Naive thymus-derived CD4-positive, alpha-beta T cell (primary cell): ENCODE measurements at regions of chr12 and their contacts with region 1.

Region 1: DNA sequence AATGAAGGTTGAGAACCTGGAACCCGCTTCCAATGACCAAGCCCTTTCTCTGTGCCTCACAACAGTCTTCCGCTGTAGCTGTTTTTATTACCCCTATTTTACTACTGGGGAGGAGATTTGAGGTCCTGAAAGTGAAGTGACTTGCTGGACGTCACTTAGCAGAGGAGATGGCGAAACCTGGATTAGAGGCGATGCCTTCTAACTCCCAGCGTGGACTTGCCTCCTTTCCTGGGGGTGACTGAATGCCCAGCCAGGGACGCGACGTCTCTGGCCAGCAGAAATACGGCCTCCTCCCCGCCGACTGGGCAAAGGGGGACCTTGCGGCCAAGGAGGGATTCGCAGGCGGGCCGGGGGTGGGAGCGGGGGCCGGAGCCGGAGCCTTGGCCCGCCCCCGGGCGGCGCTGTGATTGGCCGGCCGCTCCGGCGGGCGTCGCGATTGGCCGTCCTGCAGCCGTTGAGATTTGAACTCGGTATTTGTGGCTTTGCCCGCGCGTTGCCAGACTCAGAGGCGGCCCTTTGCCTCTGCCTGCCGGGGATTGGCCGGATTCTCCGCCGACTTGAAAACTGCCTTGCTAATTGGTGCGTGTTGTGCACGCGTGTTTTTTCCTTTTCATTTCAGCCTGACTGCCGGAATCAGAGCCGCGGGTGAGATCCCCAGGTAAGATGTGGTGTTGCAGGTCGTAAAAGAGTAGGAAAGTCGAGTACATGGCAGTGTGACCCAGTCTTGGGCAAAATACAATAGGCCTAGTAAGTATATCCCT is at the start of gene NCAPD2:
- DNase-seq: peak; percentile 82 to 97 (median 96)
- ATAC-seq: peak; percentile 91
- H3K4me3 ChIP-seq: peak within 1 kb of the TSS; percentile 98
- H3K4me3 Mint-ChIP-seq: peak within 1 kb of the TSS; percentile 86 to 98 (median 96)
- H3K27ac ChIP-seq: peak within 1 kb of the TSS; percentile 83
- H3K27ac Mint-ChIP-seq: peak within 1 kb of the TSS; percentile 87 to 97 (median 96)
- H3K4me1 ChIP-seq: peaks cover 22 to 24% of the 10 kb centered on the region in 2 donors
- H3K4me1 Mint-ChIP-seq: peaks cover 18 to 44% (median 37%) of the 10 kb centered on the region in 7 donors
- H3K27me3 ChIP-seq: no peaks in the 10 kb centered on the region
- H3K27me3 Mint-ChIP-seq: no peaks in the 10 kb centered on the region
- total RNA-seq, gene NCAPD2: 30.3 to 121 (median 38.4) TPM

Region 2: GRCh38 chr12:5716231-5716630 is 777.4 kb before region 1 on chr12:
- CTCF ChIA-PET with region 1: no interaction called
- POLR2A ChIA-PET with region 1: no interaction called
- intact Hi-C with region 1: no loop called
- DNase-seq: no peak
- ATAC-seq: no peak
- H3K4me3 ChIP-seq: no peak overlapping the region
- H3K4me3 Mint-ChIP-seq: no peak overlapping the region
- H3K27ac ChIP-seq: no peak overlapping the region
- H3K27ac Mint-ChIP-seq: no peak overlapping the region
- H3K4me1 ChIP-seq: no peaks in the 10 kb centered on the region
- H3K4me1 Mint-ChIP-seq: peaks cover 0 to 14% (median 4%) of the 10 kb centered on the region in 7 donors
- H3K27me3 ChIP-seq: no peaks in the 10 kb centered on the region
- H3K27me3 Mint-ChIP-seq: peaks cover 4 to 35% (median 14%) of the 10 kb centered on the region in 5 donors

Region 3: DNA sequence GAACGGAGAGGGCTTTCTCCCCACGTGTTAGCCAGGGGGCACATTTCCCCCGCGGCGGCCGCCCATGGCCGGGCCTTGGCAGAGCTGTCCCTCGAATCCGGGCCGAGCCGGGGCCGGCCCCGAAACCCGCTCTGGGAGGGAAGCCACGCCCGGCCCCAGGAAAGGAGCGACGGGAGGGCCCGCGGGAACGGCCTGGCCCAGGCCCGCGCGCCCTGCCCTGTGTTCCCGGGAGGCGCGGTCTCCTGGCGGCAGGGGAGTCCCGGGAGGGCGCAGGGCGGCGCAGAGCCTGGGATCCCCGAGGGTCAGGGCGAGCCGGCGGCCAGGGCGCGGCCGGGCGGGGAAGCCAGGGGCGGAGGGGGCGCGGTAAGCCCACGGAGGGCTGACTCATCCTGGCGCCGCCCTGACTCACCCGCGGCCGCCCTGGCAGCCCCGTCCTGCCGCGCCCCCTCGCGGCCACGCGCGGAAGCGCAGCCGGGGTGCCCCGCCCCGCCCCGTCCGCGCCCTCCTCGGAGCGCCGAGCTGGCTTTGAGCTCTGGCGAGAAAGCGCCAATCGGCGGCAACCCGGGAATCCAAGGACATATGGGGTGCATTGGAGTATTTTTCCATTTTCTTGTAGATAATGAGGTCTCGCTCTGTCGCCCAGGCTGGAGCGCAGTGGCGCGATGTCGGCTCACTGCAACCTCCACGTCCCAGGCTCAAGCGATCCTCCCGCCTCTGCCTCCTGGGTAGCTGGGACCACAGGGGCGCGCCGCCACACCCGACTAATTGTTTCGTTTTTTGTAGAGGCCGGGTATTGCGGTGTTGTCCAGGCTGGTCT is 215.0 kb before region 1 on chr12:
- CTCF ChIA-PET with region 1: no interaction called
- POLR2A ChIA-PET with region 1: no interaction called
- intact Hi-C with region 1: no loop called
- DNase-seq: peak; percentile 66 to 96 (median 83)
- ATAC-seq: peak; percentile 99
- H3K4me3 ChIP-seq: peak overlapping the region; percentile 23
- H3K4me3 Mint-ChIP-seq: peak overlapping the region; percentile 17 to 82 (median 71)
- H3K27ac ChIP-seq: no peak overlapping the region
- H3K27ac Mint-ChIP-seq: peak overlapping the region in 2 of 9 donors; percentile 22 to 72
- H3K4me1 ChIP-seq: peaks cover 0 to 3% of the 10 kb centered on the region in 2 donors
- H3K4me1 Mint-ChIP-seq: peaks cover 0 to 11% (median 6%) of the 10 kb centered on the region in 7 donors
- H3K27me3 ChIP-seq: peaks cover 0 to 3% of the 10 kb centered on the region in 2 donors
- H3K27me3 Mint-ChIP-seq: peaks cover 5 to 33% (median 19%) of the 10 kb centered on the region in 5 donors

Region 4: DNA sequence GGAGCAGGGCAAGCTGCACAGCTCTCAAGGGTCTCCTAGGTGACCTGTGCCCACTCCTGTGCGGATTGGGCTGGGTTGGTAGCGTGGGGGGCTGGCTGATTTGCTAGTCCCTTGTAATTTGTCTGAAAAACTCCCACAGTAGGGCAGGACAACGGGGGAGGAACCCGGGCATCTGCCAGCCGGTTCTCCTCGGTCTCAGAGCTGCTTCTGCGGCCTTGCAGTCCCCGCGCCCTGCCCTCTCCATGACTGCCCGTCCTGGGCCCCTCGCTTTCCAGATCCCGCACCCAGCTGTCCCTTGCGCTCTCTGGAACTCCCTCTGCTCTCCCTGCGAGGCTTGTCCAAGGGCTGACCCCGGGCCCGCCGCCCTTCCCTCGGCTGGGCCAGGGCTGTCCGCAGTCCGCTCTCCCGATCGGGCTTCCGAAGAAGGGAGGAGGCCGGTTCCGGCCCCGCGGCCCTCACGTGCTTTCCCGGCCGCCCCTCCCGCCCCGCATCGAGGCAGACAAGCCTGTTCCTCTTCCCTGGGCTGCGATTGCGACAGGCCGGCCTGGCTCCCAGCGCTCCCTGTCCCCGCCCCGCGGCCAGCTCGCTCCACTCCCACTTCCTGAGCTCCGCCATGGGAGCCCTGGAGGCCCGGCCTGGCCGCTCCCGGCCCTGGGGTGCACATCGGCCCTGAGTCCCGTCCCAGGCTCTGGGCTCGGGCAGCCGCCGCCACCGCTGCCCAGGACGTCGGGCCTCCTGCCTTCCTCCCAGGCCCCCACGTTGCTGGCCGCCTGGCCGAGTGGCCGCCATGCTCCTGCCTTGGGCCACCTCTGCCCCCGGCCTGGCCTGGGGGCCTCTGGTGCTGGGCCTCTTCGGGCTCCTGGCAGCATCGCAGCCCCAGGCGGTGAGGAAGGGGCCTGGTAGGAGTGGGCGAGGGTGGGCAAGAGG is 109.8 kb before region 1 on chr12 and contains the start of gene LTBR:
- CTCF ChIA-PET with region 1: no interaction called
- POLR2A ChIA-PET with region 1: no interaction called
- intact Hi-C with region 1: no loop called
- DNase-seq: peak in 2 of 9 donors; percentile 17 to 43
- ATAC-seq: peak; percentile 81
- H3K4me3 ChIP-seq: no peak within 1 kb of the TSS
- H3K4me3 Mint-ChIP-seq: peak within 1 kb of the TSS; percentile 47 to 71 (median 64)
- H3K27ac ChIP-seq: peak within 1 kb of the TSS; percentile 45
- H3K27ac Mint-ChIP-seq: peak within 1 kb of the TSS in 2 of 9 donors; percentile 5 to 64
- H3K4me1 ChIP-seq: peaks cover 0 to 10% of the 10 kb centered on the region in 2 donors
- H3K4me1 Mint-ChIP-seq: peaks cover 0 to 24% (median 5%) of the 10 kb centered on the region in 7 donors
- H3K27me3 ChIP-seq: no peaks in the 10 kb centered on the region
- H3K27me3 Mint-ChIP-seq: peaks cover 4 to 73% (median 7%) of the 10 kb centered on the region in 5 donors
- total RNA-seq, gene LTBR: 0.34 to 25.2 (median 2.2) TPM

Region 5: GRCh38 chr12:6423267-6424007 is 70.2 kb before region 1 on chr12:
- CTCF ChIA-PET with region 1: interaction called, 5 read pairs
- POLR2A ChIA-PET with region 1: interaction called, 7 read pairs
- intact Hi-C with region 1: loop called (anchors 1 kb)
- DNase-seq: peak; percentile 47 to 88 (median 80)
- ATAC-seq: peak; percentile 90
- H3K4me3 ChIP-seq: no peak overlapping the region
- H3K4me3 Mint-ChIP-seq: peak overlapping the region in 7 of 10 donors; percentile 10 to 69 (median 27)
- H3K27ac ChIP-seq: peak overlapping the region; percentile 56
- H3K27ac Mint-ChIP-seq: peak overlapping the region; percentile 66 to 97 (median 86)
- H3K4me1 ChIP-seq: peaks cover 30 to 31% of the 10 kb centered on the region in 2 donors
- H3K4me1 Mint-ChIP-seq: peaks cover 18 to 46% (median 38%) of the 10 kb centered on the region in 7 donors
- H3K27me3 ChIP-seq: no peaks in the 10 kb centered on the region
- H3K27me3 Mint-ChIP-seq: no peaks in the 10 kb centered on the region

Region 6: GRCh38 chr12:6461401-6462233 is 32.1 kb before region 1 on chr12:
- CTCF ChIA-PET with region 1: no interaction called
- POLR2A ChIA-PET with region 1: interaction called, 26 read pairs
- intact Hi-C with region 1: loop called in 1 of 2 experiments (anchors 2 kb)
- DNase-seq: peak; percentile 41 to 91 (median 87)
- ATAC-seq: peak; percentile 93
- H3K4me3 ChIP-seq: peak overlapping the region; percentile 54
- H3K4me3 Mint-ChIP-seq: peak overlapping the region; percentile 74 to 89 (median 85)
- H3K27ac ChIP-seq: peak overlapping the region; percentile 93
- H3K27ac Mint-ChIP-seq: peak overlapping the region; percentile 95 to 99 (median 98)
- H3K4me1 ChIP-seq: peaks cover 59 to 81% of the 10 kb centered on the region in 2 donors
- H3K4me1 Mint-ChIP-seq: peaks cover 66 to 95% (median 87%) of the 10 kb centered on the region in 7 donors
- H3K27me3 ChIP-seq: no peaks in the 10 kb centered on the region
- H3K27me3 Mint-ChIP-seq: no peaks in the 10 kb centered on the region

Region 7: DNA sequence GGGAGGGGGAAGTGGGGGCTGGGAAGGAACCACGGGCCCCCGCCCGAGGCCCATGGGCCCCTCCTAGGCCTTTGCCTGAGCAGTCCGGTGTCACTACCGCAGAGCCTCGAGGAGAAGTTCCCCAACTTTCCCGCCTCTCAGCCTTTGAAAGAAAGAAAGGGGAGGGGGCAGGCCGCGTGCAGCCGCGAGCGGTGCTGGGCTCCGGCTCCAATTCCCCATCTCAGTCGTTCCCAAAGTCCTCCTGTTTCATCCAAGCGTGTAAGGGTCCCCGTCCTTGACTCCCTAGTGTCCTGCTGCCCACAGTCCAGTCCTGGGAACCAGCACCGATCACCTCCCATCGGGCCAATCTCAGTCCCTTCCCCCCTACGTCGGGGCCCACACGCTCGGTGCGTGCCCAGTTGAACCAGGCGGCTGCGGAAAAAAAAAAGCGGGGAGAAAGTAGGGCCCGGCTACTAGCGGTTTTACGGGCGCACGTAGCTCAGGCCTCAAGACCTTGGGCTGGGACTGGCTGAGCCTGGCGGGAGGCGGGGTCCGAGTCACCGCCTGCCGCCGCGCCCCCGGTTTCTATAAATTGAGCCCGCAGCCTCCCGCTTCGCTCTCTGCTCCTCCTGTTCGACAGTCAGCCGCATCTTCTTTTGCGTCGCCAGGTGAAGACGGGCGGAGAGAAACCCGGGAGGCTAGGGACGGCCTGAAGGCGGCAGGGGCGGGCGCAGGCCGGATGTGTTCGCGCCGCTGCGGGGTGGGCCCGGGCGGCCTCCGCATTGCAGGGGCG is 40.4 kb after region 1 on chr12 and contains the start of gene GAPDH:
- CTCF ChIA-PET with region 1: interaction called, 5 read pairs
- POLR2A ChIA-PET with region 1: interaction called, 33 read pairs
- intact Hi-C with region 1: loop called (anchors 1 kb)
- DNase-seq: peak; percentile 66 to 94 (median 83)
- ATAC-seq: peak; percentile 66
- H3K4me3 ChIP-seq: peak within 1 kb of the TSS; percentile 97
- H3K4me3 Mint-ChIP-seq: peak within 1 kb of the TSS; percentile 90 to 99 (median 94)
- H3K27ac ChIP-seq: peak within 1 kb of the TSS; percentile 81
- H3K27ac Mint-ChIP-seq: peak within 1 kb of the TSS; percentile 92 to 100 (median 94)
- H3K4me1 ChIP-seq: peaks cover 31 to 43% of the 10 kb centered on the region in 2 donors
- H3K4me1 Mint-ChIP-seq: peaks cover 28 to 59% (median 42%) of the 10 kb centered on the region in 7 donors
- H3K27me3 ChIP-seq: no peaks in the 10 kb centered on the region
- H3K27me3 Mint-ChIP-seq: peaks cover 0 to 2% (median 0%) of the 10 kb centered on the region in 5 donors
- total RNA-seq, gene GAPDH: 330 to 4,503 (median 379) TPM

Region 8: GRCh38 chr12:6662906-6663742 is 169.4 kb after region 1 on chr12 and contains the start of gene ING4:
- CTCF ChIA-PET with region 1: no interaction called
- POLR2A ChIA-PET with region 1: no interaction called
- intact Hi-C with region 1: loop called (anchors 1 kb)
- DNase-seq: peak; percentile 79 to 99 (median 98)
- ATAC-seq: peak; percentile 99
- H3K4me3 ChIP-seq: peak within 1 kb of the TSS; percentile 92
- H3K4me3 Mint-ChIP-seq: peak within 1 kb of the TSS; percentile 92 to 99 (median 96)
- H3K27ac ChIP-seq: peak within 1 kb of the TSS; percentile 80
- H3K27ac Mint-ChIP-seq: peak within 1 kb of the TSS; percentile 91 to 99 (median 96)
- H3K4me1 ChIP-seq: peaks cover 15 to 16% of the 10 kb centered on the region in 2 donors
- H3K4me1 Mint-ChIP-seq: peaks cover 18 to 47% (median 36%) of the 10 kb centered on the region in 7 donors
- H3K27me3 ChIP-seq: no peaks in the 10 kb centered on the region
- H3K27me3 Mint-ChIP-seq: peaks cover 0 to 2% (median 0%) of the 10 kb centered on the region in 5 donors
- total RNA-seq, gene ING4: 33.1 to 101 (median 39.6) TPM

Region 9: GRCh38 chr12:8026291-8026900 is 1532.7 kb after region 1 on chr12:
- CTCF ChIA-PET with region 1: no interaction called
- POLR2A ChIA-PET with region 1: no interaction called
- intact Hi-C with region 1: loop called in 1 of 2 experiments (anchors 5 kb)
- DNase-seq: peak; percentile 74 to 99 (median 98)
- ATAC-seq: peak; percentile 96
- H3K4me3 ChIP-seq: peak overlapping the region; percentile 79
- H3K4me3 Mint-ChIP-seq: peak overlapping the region; percentile 89 to 100 (median 96)
- H3K27ac ChIP-seq: peak overlapping the region; percentile 99
- H3K27ac Mint-ChIP-seq: peak overlapping the region; percentile 96 to 100 (median 99)
- H3K4me1 ChIP-seq: peaks cover 5 to 8% of the 10 kb centered on the region in 2 donors
- H3K4me1 Mint-ChIP-seq: peaks cover 5 to 36% (median 13%) of the 10 kb centered on the region in 7 donors
- H3K27me3 ChIP-seq: no peaks in the 10 kb centered on the region
- H3K27me3 Mint-ChIP-seq: peaks cover 0 to 2% (median 0%) of the 10 kb centered on the region in 5 donors